ENCODE measurements at regions of chr17 and their contacts with region 1.

Region 1: GRCh38 chr17:63075969-63076368 is 109.9 kb downstream of the TANC2 start:
- DNase-seq: peak in 2 of 14 experiments; percentile 18 to 22
- ATAC-seq: no peak
- H3K4me3 ChIP-seq: no peak overlapping the region
- H3K4me3 Mint-ChIP-seq: no peak overlapping the region
- H3K27ac ChIP-seq: no peak overlapping the region
- H3K27ac Mint-ChIP-seq: no peak overlapping the region
- H3K4me1 ChIP-seq: no peaks in the 10 kb centered on the region
- H3K4me1 Mint-ChIP-seq: no peaks in the 10 kb centered on the region
- H3K27me3 ChIP-seq: no peaks in the 10 kb centered on the region
- H3K27me3 Mint-ChIP-seq: no peaks in the 10 kb centered on the region
- CTCF ChIP-seq: no peak

Region 2: GRCh38 chr17:62703775-62704378 is 372.1 kb before region 1 on chr17:
- CTCF ChIA-PET with region 1: no interaction called
- POLR2A ChIA-PET with region 1: no interaction called
- intact Hi-C with region 1: loop called in 1 of 2 experiments (anchors 5 kb)
- DNase-seq: peak; percentile 30 to 85 (median 67)
- ATAC-seq: peak; percentile 94
- H3K4me3 ChIP-seq: peak overlapping the region; percentile 56
- H3K4me3 Mint-ChIP-seq: peak overlapping the region; percentile 34
- H3K27ac ChIP-seq: no peak overlapping the region
- H3K27ac Mint-ChIP-seq: no peak overlapping the region
- H3K4me1 ChIP-seq: peaks cover 16% of the 10 kb centered on the region
- H3K4me1 Mint-ChIP-seq: peaks cover 4% of the 10 kb centered on the region
- H3K27me3 ChIP-seq: no peaks in the 10 kb centered on the region
- H3K27me3 Mint-ChIP-seq: peaks cover 16% of the 10 kb centered on the region
- CTCF ChIP-seq: peak; percentile 78

Region 3: GRCh38 chr17:62987137-62987536 is 88.8 kb before region 1 on chr17:
- CTCF ChIA-PET with region 1: no interaction called
- POLR2A ChIA-PET with region 1: no interaction called
- intact Hi-C with region 1: no loop called
- DNase-seq: no peak
- ATAC-seq: no peak
- H3K4me3 ChIP-seq: no peak overlapping the region
- H3K4me3 Mint-ChIP-seq: no peak overlapping the region
- H3K27ac ChIP-seq: no peak overlapping the region
- H3K27ac Mint-ChIP-seq: no peak overlapping the region
- H3K4me1 ChIP-seq: no peaks in the 10 kb centered on the region
- H3K4me1 Mint-ChIP-seq: peaks cover 7% of the 10 kb centered on the region
- H3K27me3 ChIP-seq: no peaks in the 10 kb centered on the region
- H3K27me3 Mint-ChIP-seq: no peaks in the 10 kb centered on the region
- CTCF ChIP-seq: no peak

Measured in CD4-positive, alpha-beta T cell (primary cell).